Aorta (tissue), 5 donors: ENCODE measurements at regions of chr1 and their contacts with region 1.

Region 1: GRCh38 chr1:44012941-44013609 is 18.2 kb downstream of the SLC6A9 start:
- DNase-seq: no peak
- ATAC-seq: no peak
- H3K4me3 ChIP-seq: no peak overlapping the region
- H3K27ac ChIP-seq: no peak overlapping the region
- H3K4me1 ChIP-seq: no peaks in the 10 kb centered on the region
- H3K27me3 ChIP-seq: no peaks in the 10 kb centered on the region

Region 2: GRCh38 chr1:43743206-43743605 is 269.9 kb before region 1 on chr1:
- intact Hi-C with region 1: no loop called
- DNase-seq: no peak
- ATAC-seq: no peak
- H3K4me3 ChIP-seq: no peak overlapping the region
- H3K27ac ChIP-seq: no peak overlapping the region
- H3K4me1 ChIP-seq: no peaks in the 10 kb centered on the region
- H3K27me3 ChIP-seq: no peaks in the 10 kb centered on the region

Region 3: DNA sequence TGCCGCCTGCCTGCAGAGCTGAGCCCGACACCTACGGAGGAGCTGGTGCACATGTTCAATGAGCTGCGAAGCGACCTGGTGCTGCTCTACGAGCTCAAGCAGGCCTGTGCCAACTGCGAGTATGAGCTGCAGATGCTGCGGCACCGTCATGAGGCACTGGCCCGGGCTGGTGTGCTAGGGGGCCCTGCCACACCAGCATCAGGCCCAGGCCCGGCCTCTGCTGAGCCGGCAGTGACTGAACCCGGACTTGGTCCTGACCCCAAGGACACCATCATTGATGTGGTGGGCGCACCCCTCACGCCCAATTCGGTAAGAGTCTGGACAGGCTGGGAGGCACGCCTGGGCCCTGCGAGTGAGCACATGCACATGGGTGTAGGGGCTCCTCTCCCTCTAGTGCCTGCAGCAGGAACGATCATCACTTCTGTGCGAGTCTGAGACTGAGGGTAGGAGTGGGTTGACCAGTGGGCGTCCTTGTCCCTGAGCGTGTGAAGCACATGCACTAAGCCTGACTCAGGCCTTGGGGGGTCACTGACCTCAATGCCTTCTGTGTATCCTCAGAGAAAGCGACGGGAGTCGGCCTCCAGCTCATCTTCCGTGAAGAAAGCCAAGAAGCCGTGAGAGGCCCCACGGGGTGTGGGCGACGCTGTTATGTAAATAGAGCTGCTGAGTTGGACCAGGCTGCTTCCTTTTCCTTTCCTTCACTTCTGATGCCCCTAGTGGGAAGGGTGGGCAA is 207.1 kb after region 1 on chr1:
- intact Hi-C with region 1: loop called in 1 of 2 experiments (anchors 10 kb)
- DNase-seq: no peak
- ATAC-seq: no peak
- H3K4me3 ChIP-seq: no peak overlapping the region
- H3K27ac ChIP-seq: no peak overlapping the region
- H3K4me1 ChIP-seq: no peaks in the 10 kb centered on the region
- H3K27me3 ChIP-seq: no peaks in the 10 kb centered on the region